ENCODE measurements at regions of chr22 and their contacts with region 1.

Region 1: GRCh38 chr22:31970490-31971444 is 26.4 kb downstream of the YWHAH start:
- DNase-seq: peak; percentile 68 to 95
- H3K4me3 ChIP-seq: peak overlapping the region; percentile 76
- H3K27ac ChIP-seq: no peak overlapping the region
- H3K4me1 ChIP-seq: no peaks in the 10 kb centered on the region
- H3K27me3 ChIP-seq: no peaks in the 10 kb centered on the region
- CTCF ChIP-seq: peak; percentile 91

Region 2: DNA sequence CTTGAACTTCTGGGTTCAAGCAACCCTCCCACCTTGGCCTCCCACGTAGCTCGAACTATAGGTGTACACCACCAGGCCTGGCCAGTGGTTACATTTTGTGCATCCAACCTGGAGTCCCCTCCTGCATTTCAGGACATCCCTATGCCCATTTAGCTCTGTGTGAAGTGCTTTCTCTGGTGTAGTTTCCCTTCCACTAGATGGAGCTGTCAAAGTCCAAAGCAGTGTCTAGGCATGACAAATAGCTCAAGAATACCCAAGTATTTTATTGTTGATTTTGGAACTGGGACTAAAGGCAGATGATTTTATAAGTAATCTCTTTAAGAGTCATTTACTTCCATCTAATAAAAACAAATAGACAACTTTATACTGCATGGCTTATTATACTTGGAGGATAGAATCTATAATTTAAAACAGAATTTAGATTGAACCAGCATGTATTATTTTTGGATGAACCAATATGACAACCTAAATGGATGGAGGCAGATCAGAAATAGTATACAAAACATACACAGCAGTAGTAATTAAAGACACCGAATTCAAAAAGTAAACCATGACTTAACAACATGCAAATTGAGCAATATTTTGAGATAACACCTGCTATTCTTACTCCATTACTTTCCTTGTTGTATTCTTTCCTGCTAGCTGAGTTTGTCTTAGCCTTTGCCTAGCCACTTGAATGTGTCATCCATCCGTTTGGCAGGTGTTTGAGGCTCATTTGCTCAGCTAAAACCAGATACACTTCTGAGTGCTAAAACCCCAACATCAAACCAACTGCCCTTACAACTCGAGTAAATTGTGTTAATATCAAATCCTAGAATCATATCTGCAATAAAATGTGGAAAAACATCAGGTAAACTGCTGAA is 518.8 kb before region 1 on chr22:
- CTCF ChIA-PET with region 1: interaction called, 6 read pairs
- POLR2A ChIA-PET with region 1: no interaction called
- intact Hi-C with region 1: loop called (anchors 5 kb)
- DNase-seq: peak in 1 of 2 experiments; percentile 45
- H3K4me3 ChIP-seq: no peak overlapping the region
- H3K27ac ChIP-seq: no peak overlapping the region
- H3K4me1 ChIP-seq: no peaks in the 10 kb centered on the region
- H3K27me3 ChIP-seq: no peaks in the 10 kb centered on the region
- CTCF ChIP-seq: peak; percentile 65; the same call in 1 of the 2 replicates

Region 3: DNA sequence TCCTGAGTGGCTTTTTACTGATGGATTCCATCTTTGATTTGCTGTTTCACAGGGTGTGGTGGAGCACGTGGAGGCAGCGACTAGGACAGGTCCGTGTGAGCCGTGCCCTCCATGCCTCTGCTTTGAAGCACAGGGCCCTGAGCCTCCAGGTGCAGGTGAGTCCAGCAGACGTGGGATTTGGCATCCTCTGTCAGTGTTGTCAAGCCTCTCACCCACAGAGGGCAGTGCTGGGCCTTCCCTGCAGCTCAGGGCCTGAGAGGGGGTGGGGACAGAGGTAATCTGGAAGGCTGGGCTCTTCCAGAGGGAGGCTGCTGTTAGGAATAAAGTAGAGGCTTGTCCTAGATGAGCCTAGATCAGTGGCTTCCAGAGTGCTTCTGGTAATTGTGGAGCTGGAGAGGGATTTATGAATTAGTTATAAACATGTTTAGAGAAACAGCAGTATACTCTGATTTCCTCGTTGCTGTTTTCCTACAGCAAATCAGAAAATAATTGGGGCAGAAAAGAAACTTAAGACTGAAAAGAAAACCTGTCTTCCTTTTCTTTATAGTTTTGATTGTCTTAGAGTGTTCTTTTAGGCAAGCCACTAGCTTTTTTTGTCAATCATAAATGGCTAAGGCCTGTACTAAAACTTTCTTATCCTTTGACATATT is 409.4 kb before region 1 on chr22:
- CTCF ChIA-PET with region 1: interaction called, 7 read pairs
- POLR2A ChIA-PET with region 1: no interaction called
- intact Hi-C with region 1: loop called (anchors 1 kb)
- DNase-seq: peak; percentile 67 to 82
- H3K4me3 ChIP-seq: no peak overlapping the region
- H3K27ac ChIP-seq: no peak overlapping the region
- H3K4me1 ChIP-seq: no peaks in the 10 kb centered on the region
- H3K27me3 ChIP-seq: no peaks in the 10 kb centered on the region
- CTCF ChIP-seq: peak; percentile 90

Region 4: DNA sequence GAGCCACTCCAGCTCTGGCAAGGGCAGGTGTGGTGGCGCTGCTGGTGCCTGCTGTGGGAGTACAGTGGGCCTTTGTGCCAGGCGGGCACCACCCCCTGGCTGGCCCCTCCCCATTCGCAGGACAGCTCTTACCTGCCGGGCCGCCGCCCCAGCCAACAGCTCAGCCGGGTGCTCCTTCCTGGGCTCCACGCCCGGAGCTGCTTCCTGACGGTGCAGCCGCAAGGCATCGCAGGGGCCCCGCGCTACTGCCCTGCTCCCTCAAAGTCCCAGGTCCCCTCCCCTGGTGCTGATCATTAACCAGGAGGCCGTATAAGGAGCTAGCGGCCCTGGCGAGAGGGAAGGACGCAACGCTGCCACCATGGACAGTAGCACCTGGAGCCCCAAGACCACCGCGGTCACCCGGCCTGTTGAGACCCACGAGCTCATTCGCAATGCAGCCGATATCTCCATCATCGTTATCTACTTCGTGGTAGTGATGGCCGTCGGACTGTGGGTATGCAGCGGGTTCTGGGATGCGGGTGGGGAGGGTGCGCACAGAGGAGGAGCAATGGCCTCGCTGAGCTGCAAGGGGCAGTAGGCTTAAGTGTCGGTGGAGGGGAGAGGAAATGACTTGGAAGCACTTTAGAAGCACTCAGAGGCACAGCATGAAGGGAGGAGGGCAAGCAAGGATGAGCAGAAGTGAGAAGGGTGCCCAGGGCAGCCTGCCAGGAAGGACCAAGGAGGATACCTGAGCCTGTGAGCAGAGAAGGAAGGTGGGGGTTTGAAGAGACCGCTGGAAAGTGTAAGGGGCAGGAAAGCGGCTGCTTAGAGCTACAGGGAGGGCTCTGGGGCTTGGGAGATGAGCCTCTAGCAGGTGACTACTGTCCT is 72.4 kb after region 1 on chr22 and contains the start of gene SLC5A1:
- CTCF ChIA-PET with region 1: interaction called, 10 read pairs
- POLR2A ChIA-PET with region 1: no interaction called
- intact Hi-C with region 1: no loop called
- DNase-seq: peak; percentile 45 to 64
- H3K4me3 ChIP-seq: no peak within 1 kb of the TSS
- H3K27ac ChIP-seq: no peak within 1 kb of the TSS
- H3K4me1 ChIP-seq: no peaks in the 10 kb centered on the region
- H3K27me3 ChIP-seq: peaks cover 20% of the 10 kb centered on the region
- CTCF ChIP-seq: no peak
- total RNA-seq, gene SLC5A1: not detected in 2 replicates

Region 5: GRCh38 chr22:32378707-32379272 is 408.0 kb after region 1 on chr22:
- CTCF ChIA-PET with region 1: interaction called, 4 read pairs
- POLR2A ChIA-PET with region 1: no interaction called
- intact Hi-C with region 1: loop called (anchors 10 kb)
- DNase-seq: peak; percentile 15 to 42
- H3K4me3 ChIP-seq: no peak overlapping the region
- H3K27ac ChIP-seq: no peak overlapping the region
- H3K4me1 ChIP-seq: no peaks in the 10 kb centered on the region
- H3K27me3 ChIP-seq: peaks cover 28% of the 10 kb centered on the region
- CTCF ChIP-seq: peak; percentile 68

Region 6: DNA sequence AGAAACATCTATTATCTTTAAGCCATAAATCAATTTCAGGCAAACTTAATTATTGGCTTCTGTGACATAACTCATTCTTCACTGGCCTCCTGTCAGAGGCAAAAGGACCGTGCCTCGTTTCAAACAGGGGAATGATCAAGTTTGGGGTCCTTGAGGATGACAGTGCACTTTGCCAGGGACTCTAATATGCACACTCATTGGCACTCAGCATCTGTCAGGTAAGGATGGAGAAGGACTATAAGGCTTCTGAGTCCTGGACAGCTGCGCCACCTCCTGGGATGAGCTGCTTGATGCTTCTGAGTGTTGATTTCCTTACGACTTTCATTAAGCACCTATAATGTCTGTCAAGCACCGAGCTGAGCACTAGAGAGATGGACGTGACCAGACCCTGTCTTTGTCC is 473.3 kb after region 1 on chr22:
- CTCF ChIA-PET with region 1: interaction called, 12 read pairs
- POLR2A ChIA-PET with region 1: no interaction called
- intact Hi-C with region 1: no loop called
- DNase-seq: peak; percentile 25 to 51
- H3K4me3 ChIP-seq: no peak overlapping the region
- H3K27ac ChIP-seq: no peak overlapping the region
- H3K4me1 ChIP-seq: 0 out of 2 replicates have a peak, but pooled peaks cover under 1% of the 10 kb centered on the region
- H3K27me3 ChIP-seq: peaks cover 78% of the 10 kb centered on the region
- CTCF ChIP-seq: peak; percentile 70

Region 7: DNA sequence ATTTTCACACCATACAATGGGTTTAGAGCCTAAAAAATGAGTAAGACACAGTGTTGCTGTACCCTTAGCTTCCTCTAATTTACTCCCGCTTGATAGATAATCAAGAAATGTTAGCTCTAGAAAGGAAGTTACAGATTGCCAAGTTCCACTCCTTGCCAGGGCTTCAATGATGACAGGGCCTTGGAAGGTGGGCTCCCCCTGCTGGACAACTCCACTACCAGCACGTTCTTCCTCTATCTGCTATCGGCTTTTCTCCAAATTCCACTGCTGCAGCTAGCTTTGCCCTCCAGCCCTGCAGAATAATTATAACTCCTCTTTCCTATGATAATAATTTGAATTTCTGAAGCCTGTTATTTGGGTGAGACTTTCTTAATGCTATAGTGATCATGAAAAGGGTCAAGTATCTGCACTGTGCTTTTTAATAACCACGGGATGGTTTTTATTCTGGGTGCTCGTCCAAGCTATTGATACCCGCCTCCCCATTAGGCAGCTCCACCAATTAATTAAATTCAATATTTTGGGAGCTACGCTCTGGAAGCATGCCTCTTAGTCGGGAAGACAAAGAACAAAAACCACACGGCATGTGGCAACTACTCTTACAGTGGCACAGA is 1078.5 kb after region 1 on chr22:
- CTCF ChIA-PET with region 1: no interaction called
- POLR2A ChIA-PET with region 1: no interaction called
- intact Hi-C with region 1: loop called (anchors 10 kb)
- DNase-seq: peak; percentile 49 to 50
- H3K4me3 ChIP-seq: no peak overlapping the region
- H3K27ac ChIP-seq: no peak overlapping the region
- H3K4me1 ChIP-seq: no peaks in the 10 kb centered on the region
- H3K27me3 ChIP-seq: peaks cover 56% of the 10 kb centered on the region
- CTCF ChIP-seq: peak; percentile 92